Stomach (tissue), 19 donors: ENCODE measurements at regions of chr1 and their contacts with region 1.

Region 1: DNA sequence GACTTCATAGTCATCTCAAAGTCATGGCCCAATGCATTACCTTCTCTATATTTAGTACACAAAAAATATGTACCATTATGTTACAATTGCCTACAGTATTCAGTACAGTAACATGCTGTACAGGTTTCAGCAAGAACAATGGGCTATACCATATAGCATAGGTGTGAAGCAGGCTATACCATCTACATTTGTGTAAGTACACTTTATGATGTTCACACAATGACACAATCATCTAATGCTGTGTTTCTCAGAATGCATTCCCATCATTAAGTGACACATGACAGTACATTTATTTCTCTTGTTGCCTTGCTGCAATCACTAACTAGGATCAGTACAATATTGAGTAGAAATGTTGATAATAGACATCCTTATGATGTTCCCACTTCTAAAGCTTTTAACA is 46.5 kb upstream of the NFIA start:
- DNase-seq: no peak
- H3K4me3 ChIP-seq: no peak overlapping the region
- H3K27ac ChIP-seq: no peak overlapping the region
- H3K4me1 ChIP-seq: no peaks in the 10 kb centered on the region
- H3K27me3 ChIP-seq: no peaks in the 10 kb centered on the region
- CTCF ChIP-seq: no peak
- EP300 ChIP-seq: no peak
- POLR2A ChIP-seq: no peak

Region 2: DNA sequence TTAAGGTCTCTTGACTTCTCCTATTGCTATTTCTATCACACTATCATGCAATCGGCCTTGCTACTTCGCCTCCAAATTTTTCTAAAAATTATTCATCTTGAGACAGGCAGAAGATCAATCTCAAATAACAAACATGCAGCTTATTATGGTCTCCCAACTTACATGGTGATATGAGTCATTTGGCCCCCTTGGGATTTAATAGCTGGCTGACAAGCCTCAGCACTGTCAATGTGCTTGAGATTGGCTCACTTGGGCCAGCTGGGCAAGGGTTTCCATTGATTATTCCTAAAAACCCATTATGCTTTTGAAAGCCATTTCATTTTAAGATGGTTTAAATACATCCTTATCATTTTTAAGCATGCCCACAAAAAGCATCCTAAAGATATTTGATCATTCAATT is 178.0 kb before region 1 on chr1:
- intact Hi-C with region 1: loop called (anchors 10 kb)
- DNase-seq: no peak
- H3K4me3 ChIP-seq: no peak overlapping the region
- H3K27ac ChIP-seq: no peak overlapping the region
- H3K4me1 ChIP-seq: no peaks in the 10 kb centered on the region
- H3K27me3 ChIP-seq: no peaks in the 10 kb centered on the region
- CTCF ChIP-seq: no peak
- EP300 ChIP-seq: no peak
- POLR2A ChIP-seq: no peak

Region 3: DNA sequence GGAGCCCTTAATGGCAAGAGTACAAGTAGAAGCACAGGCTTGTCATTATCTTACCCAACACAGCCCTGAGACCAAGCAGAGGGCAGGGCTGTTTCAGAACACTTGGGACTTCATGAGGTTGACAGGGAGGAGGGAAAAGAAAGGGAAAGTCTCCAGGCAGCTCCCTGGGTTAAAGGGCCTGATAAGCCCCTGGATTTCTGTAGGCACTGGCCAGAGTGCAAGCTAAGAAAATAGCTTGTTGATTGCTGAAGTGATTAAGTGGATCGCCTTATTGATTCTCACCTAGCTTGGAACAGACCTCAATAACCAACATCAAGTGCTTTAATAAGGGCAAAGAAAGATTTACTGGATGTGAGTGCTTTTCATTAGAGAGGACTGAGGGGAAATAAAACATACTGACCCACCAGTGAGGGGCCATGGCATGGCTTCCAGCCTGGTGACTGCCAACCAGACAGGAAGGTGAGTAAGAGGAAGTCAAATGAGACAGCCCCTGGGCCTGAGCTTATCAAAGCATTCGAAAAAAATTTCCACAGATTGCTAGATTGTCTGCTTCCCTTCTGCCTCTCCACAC is 74.9 kb before region 1 on chr1:
- intact Hi-C with region 1: no loop called
- DNase-seq: no peak
- H3K4me3 ChIP-seq: no peak overlapping the region
- H3K27ac ChIP-seq: peak overlapping the region in 3 of 5 donors; percentile 3 to 48 (median 40)
- H3K4me1 ChIP-seq: peaks cover 0 to 13% (median 5%) of the 10 kb centered on the region in 4 donors
- H3K27me3 ChIP-seq: no peaks in the 10 kb centered on the region
- CTCF ChIP-seq: no peak
- EP300 ChIP-seq: no peak
- POLR2A ChIP-seq: no peak

Region 4: GRCh38 chr1:60978421-60979357 is 57.2 kb before region 1 on chr1:
- intact Hi-C with region 1: loop called (anchors 10 kb)
- DNase-seq: peak; percentile 43 to 73
- H3K4me3 ChIP-seq: no peak overlapping the region
- H3K27ac ChIP-seq: no peak overlapping the region
- H3K4me1 ChIP-seq: peaks cover 0 to 17% (median 8%) of the 10 kb centered on the region in 4 donors
- H3K27me3 ChIP-seq: no peaks in the 10 kb centered on the region
- CTCF ChIP-seq: peak in 5 of 7 experiments; percentile 20 to 55 (median 38)
- EP300 ChIP-seq: no peak
- POLR2A ChIP-seq: no peak

Region 5: DNA sequence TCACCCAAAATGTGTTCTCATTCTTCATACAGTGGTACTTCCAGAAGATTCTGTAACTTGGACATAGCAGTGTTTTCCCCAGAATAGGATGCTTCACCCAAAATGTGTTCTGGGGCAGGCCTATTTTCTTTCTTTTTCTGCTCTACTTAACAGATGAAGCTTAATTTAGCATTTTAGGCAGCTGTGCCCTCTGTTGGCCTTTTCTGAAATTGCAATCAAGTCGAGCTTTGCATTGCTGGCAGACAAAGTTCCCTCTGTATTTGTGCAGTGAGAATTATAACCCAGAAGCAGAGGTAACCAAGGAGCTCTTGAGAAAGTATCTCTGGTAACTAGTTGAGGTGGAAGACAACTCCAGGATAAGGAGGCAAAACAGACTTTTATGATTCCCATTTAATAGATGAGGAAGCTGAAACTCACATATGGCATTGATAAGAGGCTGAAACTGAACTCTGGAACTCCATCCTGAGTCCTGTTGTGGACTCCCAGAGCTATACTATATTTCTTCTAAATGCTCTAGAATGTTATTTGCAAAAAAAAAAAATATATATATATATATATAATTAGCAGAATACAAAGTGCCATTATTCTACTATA is 1108.5 kb after region 1 on chr1:
- intact Hi-C with region 1: no loop called
- DNase-seq: peak in 1 of 2 donors; percentile 76
- H3K4me3 ChIP-seq: no peak overlapping the region
- H3K27ac ChIP-seq: no peak overlapping the region
- H3K4me1 ChIP-seq: peaks cover 0 to 4% (median 0%) of the 10 kb centered on the region in 4 donors
- H3K27me3 ChIP-seq: no peaks in the 10 kb centered on the region
- CTCF ChIP-seq: peak in 5 of 7 experiments; percentile 16 to 55 (median 36)
- EP300 ChIP-seq: no peak
- POLR2A ChIP-seq: no peak